HEK293 (cell line): ENCODE measurements at regions of chr18 and their contacts with region 1.

Region 1: GRCh38 chr18:2104620-2105462 is 466.5 kb downstream of the METTL4 start:
- H3K4me3 ChIP-seq: no peak overlapping the region
- H3K27ac ChIP-seq: no peak overlapping the region
- H3K4me1 ChIP-seq: no peaks in the 10 kb centered on the region
- CTCF ChIP-seq: peak; percentile 77

Region 2: DNA sequence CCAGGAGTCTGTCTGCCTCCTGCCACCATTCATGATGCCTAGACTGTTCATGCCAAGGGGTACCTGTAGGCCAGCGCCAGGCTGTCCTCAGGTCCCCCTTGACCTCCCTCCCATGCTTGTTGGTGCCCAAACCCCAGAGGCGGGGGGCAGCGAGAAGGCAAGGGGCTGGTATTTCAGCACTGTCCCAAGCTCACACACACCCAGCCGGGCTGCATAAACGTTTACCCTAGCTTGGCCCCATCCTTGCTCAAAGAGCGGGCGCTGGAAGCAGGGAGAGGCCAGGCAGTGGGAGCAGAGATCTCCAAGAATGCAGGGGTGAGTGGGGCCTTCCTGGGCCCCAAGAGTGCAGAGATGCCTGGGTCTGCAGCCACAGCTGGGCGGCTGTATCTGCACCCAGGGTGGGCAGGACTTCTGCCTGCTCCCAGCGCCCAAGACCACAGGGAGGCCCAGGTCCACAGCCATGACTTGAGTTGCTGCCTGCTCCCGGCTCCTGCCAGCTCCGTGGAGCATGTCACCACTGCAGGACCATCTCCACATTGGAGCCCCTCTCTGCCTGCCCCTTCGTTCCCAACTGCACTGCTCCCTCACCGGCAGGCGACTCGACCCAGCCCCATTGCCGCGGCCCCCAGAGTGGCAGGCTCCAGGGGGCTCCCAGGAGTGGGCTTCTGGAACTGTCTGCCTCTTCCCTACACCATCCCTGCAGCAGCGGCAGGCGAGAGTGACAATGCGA is 150.1 kb before region 1 on chr18:
- CTCF ChIA-PET with region 1: no interaction called
- POLR2A ChIA-PET with region 1: no interaction called
- H3K4me3 ChIP-seq: no peak overlapping the region
- H3K27ac ChIP-seq: no peak overlapping the region
- H3K4me1 ChIP-seq: no peaks in the 10 kb centered on the region
- CTCF ChIP-seq: no peak

Region 3: GRCh38 chr18:2083691-2084090 is 21.1 kb before region 1 on chr18:
- CTCF ChIA-PET with region 1: interaction called, 12 read pairs
- POLR2A ChIA-PET with region 1: no interaction called
- H3K4me3 ChIP-seq: no peak overlapping the region
- H3K27ac ChIP-seq: no peak overlapping the region
- H3K4me1 ChIP-seq: no peaks in the 10 kb centered on the region
- CTCF ChIP-seq: no peak

Region 4: GRCh38 chr18:2139691-2140090 is 34.9 kb after region 1 on chr18:
- CTCF ChIA-PET with region 1: interaction called, 11 read pairs
- POLR2A ChIA-PET with region 1: interaction called, 4 read pairs
- H3K4me3 ChIP-seq: no peak overlapping the region
- H3K27ac ChIP-seq: no peak overlapping the region
- H3K4me1 ChIP-seq: no peaks in the 10 kb centered on the region
- CTCF ChIP-seq: no peak

Region 5: GRCh38 chr18:2223849-2224248 is 119.0 kb after region 1 on chr18:
- CTCF ChIA-PET with region 1: interaction called, 41 read pairs
- POLR2A ChIA-PET with region 1: no interaction called
- H3K4me3 ChIP-seq: no peak overlapping the region
- H3K27ac ChIP-seq: no peak overlapping the region
- H3K4me1 ChIP-seq: no peaks in the 10 kb centered on the region
- CTCF ChIP-seq: no peak

Region 6: GRCh38 chr18:2536493-2536892 is 431.7 kb after region 1 on chr18:
- CTCF ChIA-PET with region 1: interaction called, 38 read pairs
- POLR2A ChIA-PET with region 1: no interaction called
- H3K4me3 ChIP-seq: no peak overlapping the region
- H3K27ac ChIP-seq: no peak overlapping the region
- H3K4me1 ChIP-seq: peaks cover 24% of the 10 kb centered on the region
- CTCF ChIP-seq: no peak

Region 7: GRCh38 chr18:2547477-2548087 is 442.7 kb after region 1 on chr18:
- CTCF ChIA-PET with region 1: interaction called, 40 read pairs
- POLR2A ChIA-PET with region 1: no interaction called
- H3K4me3 ChIP-seq: no peak overlapping the region
- H3K27ac ChIP-seq: no peak overlapping the region
- H3K4me1 ChIP-seq: no peaks in the 10 kb centered on the region
- CTCF ChIP-seq: no peak